ENCODE measurements at regions of chrX and their contacts with region 1.

Region 1: GRCh38 chrX:68196939-68197791 is 236.1 kb downstream of the OPHN1 start:
- DNase-seq: peak; percentile 39
- H3K4me3 Mint-ChIP-seq: no peak overlapping the region
- H3K27ac Mint-ChIP-seq: no peak overlapping the region
- H3K4me1 Mint-ChIP-seq: peaks cover 16% of the 10 kb centered on the region
- H3K27me3 Mint-ChIP-seq: peaks cover 3% of the 10 kb centered on the region

Region 2: GRCh38 chrX:68183612-68184214 is 13.5 kb before region 1 on chrX:
- CTCF ChIA-PET with region 1: interaction called, 12 read pairs
- DNase-seq: peak; percentile 21
- H3K4me3 Mint-ChIP-seq: no peak overlapping the region
- H3K27ac Mint-ChIP-seq: no peak overlapping the region
- H3K4me1 Mint-ChIP-seq: peaks cover 40% of the 10 kb centered on the region
- H3K27me3 Mint-ChIP-seq: no peaks in the 10 kb centered on the region